ENCODE measurements at regions of chr1 and their contacts with region 1.

Region 1: DNA sequence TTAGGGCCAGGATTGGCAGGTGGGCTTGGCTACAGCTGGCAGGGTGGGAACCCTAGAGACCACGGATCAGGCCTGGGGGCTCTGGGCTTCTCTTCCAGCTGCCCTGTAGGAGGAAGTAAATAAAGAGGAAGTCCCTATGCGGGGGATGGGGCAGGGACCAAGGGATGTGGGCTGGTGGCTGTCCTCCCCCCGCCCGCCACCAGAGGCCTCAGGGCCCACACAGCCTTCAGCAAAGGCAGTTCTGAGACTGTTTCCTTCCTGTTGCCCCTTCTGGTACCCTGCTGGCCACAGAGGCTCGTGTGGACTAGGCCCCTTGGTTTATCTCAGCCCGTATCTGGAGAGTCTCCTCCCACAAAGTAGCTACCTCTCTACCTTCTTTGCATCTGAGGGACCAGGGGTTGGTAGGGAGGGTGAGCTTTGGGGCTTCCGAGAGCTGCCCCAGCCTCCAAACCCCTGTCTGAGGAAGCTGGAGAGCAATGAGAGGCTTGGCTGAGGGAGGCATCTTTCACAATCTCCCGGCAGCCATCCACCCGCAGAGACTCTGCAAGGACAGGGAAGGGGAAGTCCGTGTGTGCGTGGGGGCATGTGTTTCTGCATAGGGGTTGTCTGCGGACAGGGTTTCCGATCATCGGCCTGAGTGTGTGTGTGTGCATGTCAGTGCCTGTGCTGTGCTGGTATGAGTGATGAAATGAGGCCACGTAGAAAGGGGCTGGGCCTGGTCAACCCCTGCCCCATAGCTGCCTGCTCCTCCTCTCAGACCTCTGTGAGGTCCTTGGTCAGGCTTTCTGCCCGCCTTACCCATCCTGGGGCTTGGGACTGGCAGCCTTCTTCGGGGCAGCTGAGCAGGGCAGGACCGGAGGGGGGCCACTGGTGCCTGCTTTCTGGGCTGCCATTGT is 12.5 kb downstream of the RPS6KA1 start:
- DNase-seq: peak; percentile 91
- CTCF ChIP-seq: peak; percentile 40

Region 2: DNA sequence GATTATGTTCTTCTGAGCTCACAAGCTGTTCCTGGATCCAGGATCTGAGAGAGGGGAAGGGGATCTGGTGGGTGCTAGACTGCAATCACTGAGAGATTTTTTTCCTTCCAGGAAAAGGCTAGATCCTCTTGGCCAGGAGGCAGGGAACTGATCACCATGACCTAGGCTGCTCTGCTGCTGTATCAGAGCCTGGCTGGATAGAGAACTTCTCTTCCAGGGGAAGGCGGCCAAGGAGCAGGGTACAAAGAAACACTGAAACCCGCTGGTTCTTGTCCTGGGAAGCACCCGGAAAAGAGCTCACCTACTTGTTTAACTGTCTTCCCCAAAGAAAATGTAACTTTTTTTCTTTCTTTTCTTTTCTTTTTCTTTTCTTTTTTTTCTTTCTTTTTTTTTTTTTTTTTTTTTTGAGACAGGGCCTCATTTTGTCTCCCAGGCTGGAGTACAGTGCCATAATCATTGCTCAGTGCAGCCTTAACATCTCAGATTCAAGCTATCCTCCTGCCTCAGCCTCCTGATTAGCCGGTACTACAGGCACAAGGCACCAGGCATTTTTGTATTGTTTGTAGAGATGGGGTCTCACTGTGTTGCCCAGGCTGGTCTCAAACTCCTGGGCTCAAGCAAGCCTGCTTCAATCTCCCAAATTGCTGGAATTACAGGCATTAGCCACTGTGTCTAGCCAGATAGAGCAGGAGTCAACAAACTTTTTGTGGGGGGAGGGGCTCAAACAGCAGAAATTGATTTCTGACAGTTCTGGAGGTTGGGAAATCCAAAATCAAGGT is 24.9 kb before region 1 on chr1:
- CTCF ChIA-PET with region 1: interaction called, 146 read pairs
- POLR2A ChIA-PET with region 1: no interaction called
- DNase-seq: no peak
- CTCF ChIP-seq: no peak

Region 3: DNA sequence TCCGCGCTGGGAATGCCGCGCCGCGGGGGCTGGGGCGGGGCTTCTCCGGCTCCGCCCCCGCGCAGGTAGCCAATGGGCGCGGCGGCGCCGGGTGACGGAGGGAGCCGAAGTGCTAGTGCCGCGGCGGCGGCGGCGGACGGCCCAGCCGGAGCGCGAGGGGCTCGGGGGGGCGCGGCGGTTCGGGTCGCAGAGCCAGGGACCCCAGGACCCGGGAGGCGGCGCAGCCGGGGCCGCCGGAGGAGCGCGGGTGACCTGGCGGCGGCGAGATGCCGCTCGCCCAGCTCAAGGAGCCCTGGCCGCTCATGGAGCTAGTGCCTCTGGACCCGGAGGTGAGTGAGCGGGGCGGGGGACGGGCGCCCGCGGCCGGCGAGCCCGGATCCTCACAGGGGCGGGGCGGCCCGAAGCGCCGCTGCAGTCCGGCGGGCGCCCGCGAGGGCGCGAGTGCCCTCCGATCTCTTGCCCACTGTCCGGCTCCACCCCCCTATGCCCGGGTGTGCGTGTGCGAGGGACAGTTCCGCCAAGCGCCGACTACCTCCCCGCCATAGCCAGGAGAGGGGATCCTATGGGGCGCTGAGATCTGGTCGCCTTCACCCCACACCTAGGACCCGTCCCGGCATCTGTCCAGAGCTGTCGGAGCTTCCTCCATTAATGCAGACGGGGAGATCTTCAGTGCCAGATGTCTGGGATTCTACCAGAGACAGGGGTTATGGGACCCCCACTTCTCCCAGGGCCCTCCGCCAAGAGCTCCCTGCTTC is 12.2 kb before region 1 on chr1 and contains the start of gene RPS6KA1:
- CTCF ChIA-PET with region 1: interaction called, 146 read pairs
- POLR2A ChIA-PET with region 1: interaction called, 4 read pairs
- DNase-seq: peak; percentile 91
- CTCF ChIP-seq: no peak

Region 4: DNA sequence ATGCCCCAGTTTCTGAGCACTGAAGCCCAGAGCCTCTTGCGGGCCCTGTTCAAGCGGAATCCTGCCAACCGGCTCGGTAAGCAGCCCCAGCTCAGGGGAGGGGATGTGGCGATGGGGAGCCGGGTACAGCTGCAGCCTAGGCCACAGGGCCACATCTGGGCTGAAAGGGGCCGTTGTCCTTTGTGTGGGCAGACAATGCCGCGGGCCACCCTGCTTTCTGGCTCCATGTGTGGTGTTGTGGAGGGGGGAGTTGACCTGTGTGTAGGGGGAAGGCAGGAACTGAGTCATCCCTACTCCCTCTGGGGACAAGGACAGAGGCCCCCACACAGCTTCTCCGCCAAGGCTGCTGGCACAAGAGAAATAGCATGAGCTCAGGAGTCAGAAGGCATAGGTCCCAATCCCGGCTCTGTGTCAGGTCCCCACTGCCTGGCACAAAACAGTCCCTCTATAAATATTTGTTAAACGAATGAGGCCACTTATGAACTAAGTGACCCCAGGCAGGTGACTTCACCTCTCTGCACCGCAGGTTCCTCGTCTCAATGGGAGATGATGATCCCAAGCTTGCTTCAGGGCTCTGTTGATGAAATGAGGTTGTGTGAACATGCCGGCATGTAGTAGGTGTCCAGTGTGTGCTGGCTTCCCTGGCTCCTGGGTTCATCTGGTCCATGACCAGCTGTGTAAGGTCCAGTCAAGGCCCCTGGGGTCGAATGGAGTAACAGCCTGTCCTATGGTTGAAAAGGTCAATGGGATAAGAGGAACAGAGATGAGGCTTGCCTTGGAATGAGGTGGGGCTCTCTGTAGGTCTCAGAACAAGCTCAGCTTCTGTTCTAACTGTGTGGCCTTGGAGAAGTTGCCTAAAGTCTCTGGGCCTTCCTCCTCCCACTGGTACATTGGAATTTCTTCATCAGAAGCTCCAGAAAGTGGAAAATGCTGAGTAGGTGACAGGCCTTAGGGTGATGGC is 13.8 kb after region 1 on chr1:
- CTCF ChIA-PET with region 1: interaction called, 26 read pairs
- POLR2A ChIA-PET with region 1: interaction called, 3 read pairs
- DNase-seq: no peak
- CTCF ChIP-seq: no peak

Region 5: DNA sequence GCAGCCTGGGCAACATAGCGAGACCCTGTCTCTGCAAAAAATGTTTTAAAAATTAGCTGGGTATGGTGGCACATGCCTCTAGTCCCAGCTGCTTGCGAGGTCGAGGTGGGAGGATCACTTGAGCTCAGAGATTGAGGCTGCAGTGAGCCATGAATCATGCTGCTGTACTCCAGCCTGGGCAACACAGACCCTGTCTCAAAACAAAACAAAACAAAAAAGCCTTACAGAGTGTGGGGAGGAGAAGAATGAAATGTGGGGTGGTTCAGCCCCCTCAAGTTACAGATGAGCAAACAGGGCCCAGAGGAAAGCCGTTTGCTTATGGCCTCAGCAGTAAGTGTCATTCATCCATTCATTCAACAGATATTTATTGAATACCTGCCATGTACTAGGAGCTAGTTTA is 28.2 kb after region 1 on chr1:
- CTCF ChIA-PET with region 1: interaction called, 89 read pairs
- POLR2A ChIA-PET with region 1: no interaction called
- DNase-seq: no peak
- CTCF ChIP-seq: no peak

Region 6: GRCh38 chr1:26582836-26583460 is 40.9 kb after region 1 on chr1:
- CTCF ChIA-PET with region 1: interaction called, 89 read pairs
- POLR2A ChIA-PET with region 1: no interaction called
- DNase-seq: peak; percentile 68
- CTCF ChIP-seq: no peak